ENCODE measurements at regions of chr6 and their contacts with region 1.

Region 1: DNA sequence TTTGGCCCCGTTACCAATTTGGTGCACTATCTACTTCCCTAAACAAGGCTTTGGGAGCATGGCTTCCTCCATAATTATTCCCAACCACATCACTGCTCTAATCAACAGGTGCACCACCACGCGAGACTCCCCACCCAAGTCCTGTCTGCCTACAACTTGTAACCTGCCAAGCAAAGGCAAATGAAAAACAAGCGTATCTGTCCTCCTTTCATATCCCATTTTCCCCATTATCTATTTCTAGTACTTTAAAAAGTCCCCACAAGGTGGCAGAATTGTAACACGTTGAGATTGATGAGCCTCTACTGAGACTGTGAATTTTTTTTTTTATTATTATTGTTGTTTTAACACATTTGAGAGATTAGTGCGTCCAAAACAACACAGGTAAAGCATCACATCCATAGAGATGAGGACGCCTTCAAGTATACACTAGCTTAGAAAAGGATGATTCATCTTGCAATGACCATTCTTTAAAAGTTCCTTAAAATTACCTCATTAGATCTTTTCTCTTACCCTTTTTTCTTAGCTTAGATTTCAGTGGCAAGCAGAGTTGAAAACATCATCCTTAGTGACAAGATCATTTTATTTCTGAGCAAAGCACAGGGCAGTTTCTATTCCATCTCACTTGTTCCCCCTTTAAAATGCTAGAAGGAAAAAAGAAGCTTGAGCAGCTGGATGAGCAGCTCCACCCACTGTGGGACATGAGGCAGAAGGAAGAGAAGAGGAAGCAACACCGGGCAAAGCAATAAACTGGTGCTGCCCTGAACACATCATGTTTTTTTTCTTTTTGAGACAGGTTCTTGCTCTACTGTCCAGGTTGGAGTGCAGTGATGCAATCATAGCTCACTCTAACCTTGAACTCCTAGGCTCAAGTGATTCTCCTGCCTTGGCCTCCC is 210.8 kb downstream of the ARHGAP18 start:
- DNase-seq: no peak
- H3K4me3 ChIP-seq: no peak overlapping the region
- H3K27ac ChIP-seq: no peak overlapping the region
- H3K27me3 ChIP-seq: no peaks in the 10 kb centered on the region
- CTCF ChIP-seq: peak; percentile 59

Region 2: DNA sequence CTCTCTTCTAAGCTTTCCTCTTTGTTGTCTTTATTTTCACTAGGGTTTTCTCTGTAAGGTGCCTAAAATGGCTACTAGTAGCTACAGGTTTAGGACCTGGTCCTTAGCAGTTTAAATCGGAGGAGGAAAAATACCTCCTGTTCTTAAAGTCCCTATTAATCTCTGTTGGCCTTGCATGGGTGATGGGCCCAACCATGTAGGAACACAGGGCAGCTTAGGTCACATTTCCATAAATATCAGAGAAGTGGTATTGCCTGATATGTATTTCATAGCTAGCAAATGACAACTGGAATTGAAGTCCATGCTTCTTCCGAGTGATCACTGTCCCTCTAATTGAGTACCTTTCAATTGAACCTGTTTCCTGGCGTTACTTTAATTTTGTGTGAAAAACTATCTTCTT is 546.3 kb before region 1 on chr6:
- CTCF ChIA-PET with region 1: no interaction called
- POLR2A ChIA-PET with region 1: no interaction called
- DNase-seq: no peak
- H3K4me3 ChIP-seq: no peak overlapping the region
- H3K27ac ChIP-seq: no peak overlapping the region
- H3K27me3 ChIP-seq: no peaks in the 10 kb centered on the region
- CTCF ChIP-seq: no peak

Region 3: GRCh38 chr6:129050086-129050485 is 449.1 kb before region 1 on chr6:
- CTCF ChIA-PET with region 1: no interaction called
- POLR2A ChIA-PET with region 1: interaction called, 13 read pairs
- DNase-seq: no peak
- H3K4me3 ChIP-seq: no peak overlapping the region
- H3K27ac ChIP-seq: no peak overlapping the region
- H3K27me3 ChIP-seq: no peaks in the 10 kb centered on the region
- CTCF ChIP-seq: no peak

Region 4: GRCh38 chr6:129567374-129567773 is 68.2 kb after region 1 on chr6:
- CTCF ChIA-PET with region 1: interaction called, 41 read pairs
- POLR2A ChIA-PET with region 1: no interaction called
- DNase-seq: no peak
- H3K4me3 ChIP-seq: no peak overlapping the region
- H3K27ac ChIP-seq: no peak overlapping the region
- H3K27me3 ChIP-seq: no peaks in the 10 kb centered on the region
- CTCF ChIP-seq: peak; percentile 37; the same call in 1 of the 2 replicates

Region 5: DNA sequence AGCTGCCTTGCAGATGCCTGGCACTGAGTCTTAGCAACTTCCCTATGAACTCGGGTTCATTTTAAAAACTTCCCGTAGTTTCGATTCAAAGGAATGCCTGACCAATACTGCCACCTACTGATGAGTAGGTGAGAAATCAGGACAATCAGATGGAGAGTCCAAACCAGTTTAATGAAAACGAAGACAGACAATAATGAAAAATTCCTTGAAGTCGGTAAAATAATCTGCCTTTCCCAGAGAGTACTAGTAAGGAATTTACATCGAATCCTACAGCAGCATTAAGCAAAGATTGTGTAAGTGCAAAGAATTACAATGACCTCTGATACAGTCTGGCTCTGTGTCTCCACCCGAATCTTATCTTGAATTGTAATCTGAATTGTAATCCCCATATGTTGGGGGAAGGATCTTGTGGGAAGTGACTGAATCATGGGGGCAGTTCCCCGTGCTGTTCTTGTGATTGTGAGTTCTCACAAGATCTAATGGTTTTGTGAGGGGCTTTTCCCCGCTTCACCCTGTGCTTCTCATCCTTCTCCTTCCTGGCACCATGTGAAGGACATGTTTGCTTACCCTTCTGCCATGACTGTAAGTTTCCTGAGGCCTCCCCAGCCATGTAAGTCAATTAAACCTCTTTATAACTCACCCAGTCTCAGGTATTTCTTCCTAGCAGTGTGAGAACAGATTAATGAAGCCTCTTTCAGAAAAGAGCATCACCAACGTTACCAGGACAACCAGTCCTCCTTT is 76.4 kb after region 1 on chr6:
- CTCF ChIA-PET with region 1: interaction called, 41 read pairs
- POLR2A ChIA-PET with region 1: no interaction called
- DNase-seq: no peak
- H3K4me3 ChIP-seq: no peak overlapping the region
- H3K27ac ChIP-seq: no peak overlapping the region
- H3K27me3 ChIP-seq: no peaks in the 10 kb centered on the region
- CTCF ChIP-seq: peak; percentile 81

Region 6: GRCh38 chr6:129590408-129591022 is 91.3 kb after region 1 on chr6:
- CTCF ChIA-PET with region 1: interaction called, 14 read pairs
- POLR2A ChIA-PET with region 1: interaction called, 3 read pairs
- DNase-seq: peak; percentile 90
- H3K4me3 ChIP-seq: no peak overlapping the region
- H3K27ac ChIP-seq: no peak overlapping the region
- H3K27me3 ChIP-seq: no peaks in the 10 kb centered on the region
- CTCF ChIP-seq: no peak; the same call in 1 of the 2 replicates

Region 7: DNA sequence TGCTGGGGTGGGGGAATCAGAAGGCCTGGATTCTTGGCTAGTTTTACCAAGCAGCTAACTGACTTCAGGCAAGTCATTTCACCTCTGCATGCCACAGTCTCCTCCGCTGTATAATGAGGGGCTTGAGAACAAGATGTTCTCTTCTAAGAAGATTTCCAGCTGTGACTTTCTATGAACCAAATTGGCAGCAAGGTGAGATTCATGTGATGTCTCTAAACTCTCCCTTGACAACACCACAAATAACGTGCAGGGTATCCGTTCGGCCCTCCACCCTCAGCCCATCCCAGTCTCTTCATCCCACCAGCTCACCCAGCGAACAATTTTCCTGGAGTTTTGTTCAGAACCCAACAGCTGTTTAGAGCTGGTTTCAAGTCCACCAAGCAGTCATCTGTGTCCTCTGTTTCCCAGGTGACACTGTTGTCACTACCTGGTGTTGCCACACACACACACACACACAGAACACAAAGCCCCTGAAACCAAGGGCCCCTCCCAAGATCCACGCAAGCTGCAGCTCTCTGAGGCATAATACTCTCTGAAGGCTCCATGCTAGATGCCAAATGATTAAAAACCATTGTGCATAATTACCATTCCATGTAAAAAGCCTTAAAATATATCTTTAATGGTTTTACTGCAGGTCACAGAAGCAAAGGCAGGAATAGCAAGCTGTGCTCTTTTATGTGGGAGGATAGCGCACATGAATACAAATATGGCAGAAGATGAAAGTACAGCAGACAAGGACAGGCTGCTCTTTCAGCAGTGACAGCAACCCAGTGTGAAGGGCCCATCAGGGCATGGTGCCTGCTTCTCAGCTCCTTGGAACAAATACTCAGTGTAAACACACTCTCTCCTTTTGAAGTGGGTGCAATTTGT is 162.6 kb after region 1 on chr6:
- CTCF ChIA-PET with region 1: no interaction called
- POLR2A ChIA-PET with region 1: no interaction called
- DNase-seq: no peak
- H3K4me3 ChIP-seq: no peak overlapping the region
- H3K27ac ChIP-seq: no peak overlapping the region
- H3K27me3 ChIP-seq: no peaks in the 10 kb centered on the region
- CTCF ChIP-seq: no peak

Measured in AG04450 (cell line).